Posterior vena cava (tissue), 2 donors: ENCODE measurements at regions of chr12 and their contacts with region 1.

Region 1: DNA sequence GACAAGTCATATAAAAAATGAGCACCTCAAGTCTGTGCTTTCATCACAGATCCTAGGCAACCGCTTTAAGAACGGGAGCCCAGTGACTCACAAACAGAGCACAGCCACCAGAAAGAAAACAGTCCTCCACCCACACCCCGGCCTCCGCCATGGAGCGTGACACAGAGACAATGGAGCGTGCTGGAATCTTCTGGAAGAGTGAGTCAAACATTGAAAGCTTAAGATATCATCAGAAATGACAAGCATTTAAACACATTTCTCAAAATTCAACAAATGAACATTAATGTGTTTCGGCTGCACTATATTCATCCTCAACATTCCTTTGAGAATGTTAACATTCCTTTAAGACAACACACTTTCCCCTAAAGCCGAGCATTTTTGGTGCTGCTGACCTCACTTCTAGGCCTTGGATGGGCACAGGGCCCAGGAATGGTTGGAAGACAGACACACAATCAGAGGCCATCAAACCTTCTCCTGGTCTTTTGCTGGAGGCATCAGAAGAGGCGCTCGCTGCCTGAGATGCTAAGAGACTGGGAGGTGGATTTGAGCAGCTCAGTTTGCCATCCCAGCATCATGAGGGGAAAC is 23.6 kb upstream of the TMEM132D start:
- DNase-seq: no peak

Region 2: GRCh38 chr12:129629901-129630300 is 297.5 kb before region 1 on chr12:
- intact Hi-C with region 1: loop called in 1 of 2 experiments (anchors 10 kb)
- DNase-seq: no peak